ENCODE measurements at regions of chr6 and their contacts with region 1.

Region 1: GRCh38 chr6:43369174-43370022 is at the start of gene ZNF318:
- DNase-seq: peak; percentile 95
- ATAC-seq: peak; percentile 96
- H3K4me3 Mint-ChIP-seq: peak within 1 kb of the TSS; percentile 83
- H3K27ac Mint-ChIP-seq: peak within 1 kb of the TSS; percentile 92
- H3K4me1 Mint-ChIP-seq: peaks cover 32% of the 10 kb centered on the region
- H3K27me3 Mint-ChIP-seq: peaks cover 25% of the 10 kb centered on the region
- total RNA-seq, gene ZNF318: 6.7 to 7.0 TPM

Region 2: DNA sequence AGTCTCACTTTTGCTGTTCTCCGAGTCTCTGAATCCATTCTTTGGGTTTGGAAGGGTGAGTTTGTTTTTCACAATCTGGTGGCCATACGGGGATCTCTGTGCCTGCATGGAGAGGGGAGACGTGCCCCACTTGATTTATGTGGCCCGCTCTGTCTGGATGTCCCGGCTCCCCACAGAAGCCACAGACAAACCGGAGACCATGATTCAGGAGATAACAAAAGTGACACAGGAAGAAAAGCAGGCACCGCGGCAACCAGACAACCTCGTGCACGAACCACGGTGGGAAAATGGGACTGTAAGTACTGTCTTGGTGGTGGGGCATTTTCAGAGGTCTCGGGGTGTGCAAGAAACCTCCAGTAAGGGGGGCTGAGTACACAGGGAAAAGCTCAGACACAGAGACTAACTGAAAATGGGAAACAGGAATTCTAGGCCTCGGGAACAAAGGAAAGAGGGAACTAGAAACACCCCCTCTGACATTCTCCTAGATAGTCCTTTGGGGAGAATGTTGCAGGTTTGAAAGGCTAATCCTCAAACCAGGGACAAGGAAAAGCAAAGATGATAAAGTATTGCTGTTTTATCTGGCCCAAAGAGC is 22.1 kb after region 1 on chr6:
- CTCF ChIA-PET with region 1: interaction called, 11 read pairs
- POLR2A ChIA-PET with region 1: interaction called, 3 read pairs
- DNase-seq: peak; percentile 62
- ATAC-seq: peak; percentile 83
- H3K4me3 Mint-ChIP-seq: no peak overlapping the region
- H3K27ac Mint-ChIP-seq: no peak overlapping the region
- H3K4me1 Mint-ChIP-seq: peaks cover 21% of the 10 kb centered on the region
- H3K27me3 Mint-ChIP-seq: peaks cover 74% of the 10 kb centered on the region

Region 3: DNA sequence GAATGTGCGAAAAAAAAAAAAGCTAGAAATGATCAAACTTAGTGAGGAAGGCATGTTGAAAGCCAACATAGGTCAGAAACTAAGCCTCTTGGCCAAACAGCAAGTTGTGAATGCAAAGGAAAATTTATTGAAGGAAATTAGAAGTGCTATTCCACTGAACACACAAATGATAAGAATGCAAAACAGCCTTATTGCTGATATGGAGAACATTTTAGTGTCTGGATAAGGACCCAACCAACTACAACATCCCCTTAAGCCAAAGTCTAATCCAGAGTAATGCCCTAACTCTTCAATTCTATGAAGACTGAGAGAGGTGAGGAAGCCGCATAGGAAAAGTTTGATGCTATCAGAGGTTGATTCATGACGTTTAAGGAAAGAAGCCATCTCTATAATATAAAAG is 52.4 kb after region 1 on chr6:
- CTCF ChIA-PET with region 1: no interaction called
- POLR2A ChIA-PET with region 1: no interaction called
- DNase-seq: no peak
- ATAC-seq: no peak
- H3K4me3 Mint-ChIP-seq: no peak overlapping the region
- H3K27ac Mint-ChIP-seq: no peak overlapping the region
- H3K4me1 Mint-ChIP-seq: peaks cover under 1% of the 10 kb centered on the region
- H3K27me3 Mint-ChIP-seq: peaks cover 7% of the 10 kb centered on the region

Region 4: GRCh38 chr6:43506667-43507471 is 137.5 kb after region 1 on chr6:
- CTCF ChIA-PET with region 1: no interaction called
- POLR2A ChIA-PET with region 1: no interaction called
- DNase-seq: peak; percentile 89
- ATAC-seq: peak; percentile 67
- H3K4me3 Mint-ChIP-seq: no peak overlapping the region
- H3K27ac Mint-ChIP-seq: no peak overlapping the region
- H3K4me1 Mint-ChIP-seq: peaks cover 13% of the 10 kb centered on the region
- H3K27me3 Mint-ChIP-seq: peaks cover 15% of the 10 kb centered on the region